ENCODE measurements at regions of chr20 and their contacts with region 1.

Region 1: GRCh38 chr20:44080646-44081267 is 106.2 kb downstream of the JPH2 start:
- DNase-seq: peak; percentile 78
- ATAC-seq: peak; percentile 96
- H3K4me3 ChIP-seq: no peak overlapping the region
- H3K27ac ChIP-seq: peak overlapping the region; percentile 12; the same call in 1 of the 2 replicates
- H3K4me1 ChIP-seq: peaks cover 7% of the 10 kb centered on the region; the same call in 1 of the 2 replicates
- H3K27me3 ChIP-seq: no peaks in the 10 kb centered on the region
- CTCF ChIP-seq: peak; percentile 95

Region 2: DNA sequence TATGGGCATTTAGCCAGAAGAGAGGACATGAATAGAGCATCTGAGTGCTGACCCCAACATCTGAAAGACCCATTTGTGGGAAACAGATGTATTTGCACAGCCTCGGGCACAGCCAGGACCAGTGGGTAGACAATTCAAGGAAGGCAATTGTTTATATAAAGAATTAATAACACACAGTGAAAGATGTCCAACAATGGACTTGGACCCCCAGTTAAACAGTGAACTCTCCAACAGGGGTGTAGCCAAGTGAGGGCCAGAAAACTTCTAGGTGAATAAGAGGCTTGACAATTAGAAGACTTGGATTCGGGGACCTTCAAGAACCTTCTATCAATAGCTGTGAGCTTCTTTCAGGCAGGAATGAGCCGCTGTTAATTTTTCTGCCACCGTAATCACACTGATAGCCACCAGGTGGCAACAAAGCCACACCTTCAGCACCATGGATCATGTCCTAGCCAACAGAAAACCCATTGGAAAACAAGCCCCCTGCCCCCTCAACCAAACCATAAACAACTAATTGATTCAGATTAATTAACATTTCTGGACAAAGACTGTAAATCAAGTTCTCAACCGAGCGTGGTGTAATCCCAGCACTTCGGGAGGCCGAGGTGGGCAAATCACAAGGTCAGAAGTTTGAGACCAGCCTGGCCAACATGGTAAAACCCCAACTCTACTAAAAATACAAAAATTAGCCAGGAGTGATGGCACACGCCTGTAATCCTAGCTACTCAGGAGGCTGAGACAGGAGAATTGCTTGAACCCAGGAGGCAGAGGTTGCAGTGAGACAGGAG is 631.8 kb before region 1 on chr20:
- CTCF ChIA-PET with region 1: no interaction called
- POLR2A ChIA-PET with region 1: no interaction called
- in situ Hi-C with region 1: no loop called
- intact Hi-C with region 1: loop called (anchors 10 kb)
- DNase-seq: peak; percentile 46
- ATAC-seq: peak; percentile 83
- H3K4me3 ChIP-seq: no peak overlapping the region
- H3K27ac ChIP-seq: no peak overlapping the region
- H3K4me1 ChIP-seq: no peaks in the 10 kb centered on the region
- H3K27me3 ChIP-seq: no peaks in the 10 kb centered on the region
- CTCF ChIP-seq: peak; percentile 86

Region 3: DNA sequence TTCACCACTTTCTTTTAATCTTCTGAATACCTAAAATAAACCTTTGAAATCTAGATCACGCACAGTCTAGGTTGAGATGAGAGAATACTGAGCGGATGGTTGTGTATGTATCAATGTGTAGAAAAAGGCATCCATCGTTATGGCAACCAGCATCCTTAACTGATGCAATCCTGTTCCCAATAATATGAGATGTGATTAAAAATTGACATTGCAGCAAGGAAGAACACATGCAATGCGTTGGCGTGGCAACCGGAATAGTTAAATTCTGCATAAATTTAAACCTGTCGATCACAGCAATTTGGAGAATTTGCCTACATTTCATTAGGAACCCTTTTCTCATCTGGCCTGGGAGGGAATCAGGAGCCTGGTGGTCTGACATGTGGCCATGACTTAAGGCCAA is 574.5 kb before region 1 on chr20:
- CTCF ChIA-PET with region 1: no interaction called
- POLR2A ChIA-PET with region 1: interaction called, 10 read pairs
- in situ Hi-C with region 1: no loop called
- intact Hi-C with region 1: no loop called
- DNase-seq: no peak
- ATAC-seq: no peak
- H3K4me3 ChIP-seq: no peak overlapping the region
- H3K27ac ChIP-seq: no peak overlapping the region
- H3K4me1 ChIP-seq: no peaks in the 10 kb centered on the region; the same call in 1 of the 2 replicates
- H3K27me3 ChIP-seq: no peaks in the 10 kb centered on the region
- CTCF ChIP-seq: no peak

Region 4: DNA sequence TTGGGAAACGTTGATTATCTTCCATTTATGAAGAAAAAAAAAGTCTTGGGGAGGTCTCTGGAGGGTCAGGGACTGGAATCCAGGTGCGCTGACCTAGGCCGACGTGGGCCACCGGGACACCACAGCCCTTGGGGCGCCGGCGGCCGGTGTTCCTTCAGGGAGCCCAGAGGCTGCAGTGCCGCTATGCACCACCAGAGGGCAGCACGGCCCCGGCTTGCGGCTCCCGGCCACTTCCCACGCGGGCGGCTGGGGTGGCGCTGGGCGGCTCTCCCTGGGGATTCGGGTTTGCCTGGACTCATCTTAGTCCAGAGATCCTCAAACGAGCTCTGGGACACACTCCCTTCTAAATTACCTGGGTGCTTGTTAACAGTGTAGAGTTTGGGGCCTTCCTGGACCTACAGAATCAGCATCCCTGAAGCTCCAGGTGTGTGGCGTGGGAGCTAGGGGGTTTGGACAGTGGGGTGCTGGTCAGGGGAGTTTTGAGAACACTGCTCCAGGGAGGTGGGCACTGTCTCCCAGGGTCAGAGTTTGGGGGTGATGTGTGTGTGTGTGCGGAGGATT is 330.9 kb before region 1 on chr20:
- CTCF ChIA-PET with region 1: interaction called, 14 read pairs
- POLR2A ChIA-PET with region 1: no interaction called
- in situ Hi-C with region 1: no loop called
- intact Hi-C with region 1: loop called (anchors 1 kb)
- DNase-seq: peak; percentile 27
- ATAC-seq: peak; percentile 94
- H3K4me3 ChIP-seq: no peak overlapping the region
- H3K27ac ChIP-seq: no peak overlapping the region
- H3K4me1 ChIP-seq: peaks cover 3% of the 10 kb centered on the region; the same call in 1 of the 2 replicates
- H3K27me3 ChIP-seq: no peaks in the 10 kb centered on the region
- CTCF ChIP-seq: peak; percentile 99

Region 5: GRCh38 chr20:43840382-43841070 is 240.2 kb before region 1 on chr20:
- CTCF ChIA-PET with region 1: interaction called, 4 read pairs
- POLR2A ChIA-PET with region 1: no interaction called
- in situ Hi-C with region 1: no loop called
- intact Hi-C with region 1: loop called (anchors 2 kb)
- DNase-seq: no peak
- ATAC-seq: peak; percentile 76
- H3K4me3 ChIP-seq: no peak overlapping the region
- H3K27ac ChIP-seq: no peak overlapping the region
- H3K4me1 ChIP-seq: peaks cover 13% of the 10 kb centered on the region
- H3K27me3 ChIP-seq: no peaks in the 10 kb centered on the region
- CTCF ChIP-seq: peak; percentile 86

Region 6: DNA sequence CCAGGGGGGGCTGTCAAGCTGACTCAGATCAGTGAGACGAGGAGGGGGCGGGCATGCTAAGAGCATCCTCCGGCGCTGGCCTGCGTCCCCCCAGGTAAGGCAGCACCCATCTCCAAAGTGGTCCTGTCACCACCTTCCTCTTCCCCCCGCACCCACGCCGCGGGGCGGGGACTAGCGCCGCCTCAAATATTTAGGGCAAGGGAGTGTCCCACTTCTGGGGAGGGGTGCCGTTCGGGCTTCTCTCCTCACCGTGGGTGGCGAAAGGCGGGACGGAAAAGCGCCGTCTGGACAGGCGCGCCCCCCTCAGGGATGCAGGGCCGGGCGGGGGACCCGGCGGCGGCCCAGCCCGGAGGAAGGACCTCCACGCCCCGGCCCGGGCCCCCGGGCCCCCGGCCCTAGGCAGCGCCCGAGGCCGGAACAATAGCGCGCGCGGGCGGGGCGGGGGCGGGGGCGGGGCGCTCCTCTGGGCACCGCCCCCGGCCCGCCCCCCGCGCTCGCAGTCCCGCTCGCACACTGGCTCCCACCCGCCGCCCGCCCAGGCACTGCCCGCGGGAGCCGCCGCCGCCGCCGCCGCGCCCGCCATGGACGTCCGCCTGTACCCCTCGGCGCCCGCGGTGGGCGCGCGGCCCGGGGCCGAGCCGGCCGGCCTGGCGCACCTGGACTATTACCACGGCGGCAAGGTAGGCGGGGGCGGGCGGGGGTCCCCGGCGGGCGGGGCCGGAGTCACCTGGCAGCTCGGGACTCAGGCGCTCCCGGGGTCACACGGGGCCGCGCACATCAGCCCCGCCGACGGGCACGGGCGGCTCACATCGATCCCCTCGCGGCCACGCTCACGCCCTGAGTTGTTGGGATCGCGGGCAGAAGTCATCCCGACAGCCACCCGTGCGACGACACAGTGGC is 166.2 kb before region 1 on chr20 and contains the start of gene TOX2:
- CTCF ChIA-PET with region 1: no interaction called
- POLR2A ChIA-PET with region 1: no interaction called
- in situ Hi-C with region 1: no loop called
- intact Hi-C with region 1: loop called (anchors 5 kb)
- DNase-seq: no peak
- ATAC-seq: peak; percentile 88
- H3K4me3 ChIP-seq: peak within 1 kb of the TSS; percentile 63 to 76
- H3K27ac ChIP-seq: peak within 1 kb of the TSS; percentile 86
- H3K4me1 ChIP-seq: peaks cover 23% of the 10 kb centered on the region
- H3K27me3 ChIP-seq: no peaks in the 10 kb centered on the region
- CTCF ChIP-seq: no peak
- total RNA-seq, gene TOX2: 85.4 TPM

Region 7: DNA sequence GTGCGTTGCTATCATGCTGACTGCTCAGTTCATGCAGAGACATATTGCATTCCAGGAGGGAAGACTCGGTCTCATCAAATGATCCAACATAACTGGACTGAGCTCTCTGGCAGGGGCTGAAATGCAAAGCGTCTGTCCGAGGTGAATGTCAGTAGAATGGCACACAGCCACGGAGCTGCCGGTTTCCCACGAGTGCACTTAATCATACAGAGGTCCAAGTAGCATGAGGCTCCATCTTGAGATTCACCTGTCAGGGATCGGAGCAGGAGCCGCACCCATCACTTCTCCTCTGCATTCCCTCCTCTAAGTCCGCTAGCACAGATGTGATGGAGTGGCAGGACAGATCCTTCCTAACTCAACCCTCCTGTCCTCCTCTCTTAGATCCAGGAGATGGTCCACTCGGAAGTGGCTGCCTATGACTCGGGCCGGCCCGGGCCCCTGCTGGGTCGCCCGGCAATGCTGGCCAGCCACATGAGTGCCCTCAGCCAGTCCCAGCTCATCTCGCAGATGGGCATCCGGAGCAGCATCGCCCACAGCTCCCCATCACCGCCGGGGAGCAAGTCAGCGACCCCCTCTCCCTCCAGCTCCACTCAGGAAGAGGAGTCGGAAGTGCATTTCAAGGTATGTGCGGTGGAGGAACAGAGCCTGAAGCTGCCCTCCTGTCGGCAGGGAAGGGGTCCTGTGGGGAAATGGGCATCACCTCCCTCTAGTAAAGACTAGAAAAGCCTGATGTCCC is 29.7 kb before region 1 on chr20:
- CTCF ChIA-PET with region 1: no interaction called
- POLR2A ChIA-PET with region 1: no interaction called
- in situ Hi-C with region 1: no loop called
- intact Hi-C with region 1: no loop called
- DNase-seq: no peak
- ATAC-seq: no peak
- H3K4me3 ChIP-seq: no peak overlapping the region
- H3K27ac ChIP-seq: no peak overlapping the region
- H3K4me1 ChIP-seq: no peaks in the 10 kb centered on the region
- H3K27me3 ChIP-seq: no peaks in the 10 kb centered on the region
- CTCF ChIP-seq: no peak

Region 8: DNA sequence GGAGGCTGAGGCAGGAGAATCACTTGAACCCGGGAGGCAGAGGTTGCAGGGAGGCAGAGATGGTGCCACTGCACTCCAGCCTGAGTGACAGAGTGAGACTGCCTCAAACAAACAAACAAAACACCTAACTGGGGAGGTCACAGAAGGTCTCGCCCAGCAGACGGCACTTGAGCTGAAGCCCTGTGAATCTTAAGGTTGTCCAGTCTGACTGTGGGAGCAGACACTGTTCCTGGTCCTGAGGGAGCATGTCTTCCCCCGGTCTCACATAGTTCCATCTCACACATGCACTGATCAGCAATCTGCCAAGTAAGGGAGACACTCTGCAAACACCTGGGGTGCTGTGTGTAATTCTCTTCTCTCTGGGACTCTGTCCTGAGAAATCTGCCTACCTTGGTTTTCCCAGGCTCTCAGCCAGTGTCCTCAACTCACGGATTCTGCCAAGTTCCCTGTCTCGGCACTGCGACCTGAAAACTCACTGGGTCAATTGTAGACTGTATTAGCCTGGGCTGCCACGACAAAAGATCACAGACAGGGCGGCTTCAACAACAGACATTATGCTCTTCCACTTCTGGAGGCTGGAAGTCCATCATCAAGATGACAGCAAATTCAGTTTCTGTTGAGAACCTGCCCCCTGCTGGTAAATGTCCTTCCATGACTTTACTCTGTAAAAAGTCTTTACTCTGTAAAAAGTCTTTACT is 11.9 kb after region 1 on chr20:
- CTCF ChIA-PET with region 1: no interaction called
- POLR2A ChIA-PET with region 1: interaction called, 17 read pairs
- in situ Hi-C with region 1: no loop called
- intact Hi-C with region 1: no loop called
- DNase-seq: no peak
- ATAC-seq: peak; percentile 70; the same call in 1 of the 2 replicates
- H3K4me3 ChIP-seq: no peak overlapping the region
- H3K27ac ChIP-seq: no peak overlapping the region
- H3K4me1 ChIP-seq: no peaks in the 10 kb centered on the region
- H3K27me3 ChIP-seq: no peaks in the 10 kb centered on the region
- CTCF ChIP-seq: peak; percentile 78